ENCODE measurements at regions of chr4 and their contacts with region 1.

Region 1: GRCh38 chr4:51895813-51896408 is 53.0 kb downstream of the DCUN1D4 start:
- DNase-seq: peak; percentile 45
- ATAC-seq: peak; percentile 95

Region 2: DNA sequence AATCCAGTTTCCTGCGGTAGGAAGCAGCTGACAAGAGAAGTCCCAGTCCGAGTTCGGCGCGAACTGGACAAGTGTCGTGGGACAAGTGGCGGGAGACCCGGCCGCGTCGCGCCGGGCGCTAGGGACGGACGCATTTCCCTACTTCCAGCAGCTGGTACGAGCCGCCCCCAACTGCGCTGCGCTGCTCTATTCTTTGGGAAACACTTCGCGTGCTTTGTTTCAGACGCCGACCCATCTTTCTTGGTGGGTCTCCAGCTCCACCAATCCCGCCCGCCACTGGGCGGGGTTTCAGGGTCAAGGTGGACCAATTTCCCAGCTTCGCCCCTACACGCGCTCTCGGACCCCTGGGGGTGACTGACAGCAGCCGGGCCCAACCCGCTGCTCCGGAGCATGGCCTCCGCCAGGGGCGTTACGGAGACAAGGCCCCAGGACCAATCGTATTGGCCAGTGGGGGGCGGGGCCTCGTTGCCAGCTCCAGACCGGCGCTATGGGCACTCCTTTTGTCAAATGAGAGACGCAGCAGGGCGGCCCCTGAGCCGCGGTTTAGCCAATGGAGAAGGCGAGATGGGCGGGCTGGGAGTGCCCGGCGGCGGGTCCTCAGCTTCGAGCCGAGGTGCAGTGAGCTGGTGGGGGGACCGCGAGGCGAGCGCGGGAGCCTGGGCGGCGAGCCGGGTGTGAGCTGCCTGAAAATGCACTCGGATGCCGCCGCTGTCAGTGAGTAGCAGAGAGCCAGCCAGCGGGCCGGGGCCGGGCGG is 53.2 kb before region 1 on chr4 and contains the start of gene DCUN1D4:
- intact Hi-C with region 1: loop called (anchors 10 kb)
- DNase-seq: peak; percentile 100
- ATAC-seq: peak; percentile 92
- total RNA-seq, gene DCUN1D4: 35.2 TPM

Region 3: GRCh38 chr4:51858607-51859202 is 37.2 kb before region 1 on chr4:
- intact Hi-C with region 1: no loop called
- DNase-seq: no peak
- ATAC-seq: peak; percentile 25

Region 4: DNA sequence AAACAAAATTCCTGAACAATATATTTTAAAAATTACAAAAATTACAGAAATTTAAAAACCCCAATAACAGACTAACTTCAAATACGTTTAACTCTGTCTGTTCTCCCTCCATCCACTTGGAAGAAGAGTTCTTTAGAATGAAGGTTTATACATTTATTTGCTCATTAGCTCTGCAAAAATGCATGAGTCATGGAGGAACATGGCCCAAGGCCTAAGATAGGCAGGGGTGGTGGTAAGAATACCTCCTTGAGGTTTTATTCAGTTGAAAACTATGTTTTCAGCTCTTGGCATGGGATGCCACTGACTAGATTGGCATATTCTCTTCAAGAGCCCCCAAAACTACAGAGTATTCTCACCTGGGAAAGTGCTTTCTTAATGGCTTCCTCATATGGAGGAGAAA is 133.1 kb after region 1 on chr4:
- intact Hi-C with region 1: loop called (anchors 10 kb)
- DNase-seq: no peak
- ATAC-seq: no peak